CD8-positive, alpha-beta T cell (primary cell): ENCODE measurements at regions of chr9 and their contacts with region 1.

Region 1: GRCh38 chr9:28539432-28540070 is 966.3 kb upstream of the C9orf72 start:
- DNase-seq: no peak
- ATAC-seq: no peak
- H3K4me3 ChIP-seq: no peak overlapping the region
- H3K4me3 Mint-ChIP-seq: no peak overlapping the region
- H3K27ac ChIP-seq: no peak overlapping the region
- H3K27ac Mint-ChIP-seq: no peak overlapping the region
- H3K4me1 ChIP-seq: no peaks in the 10 kb centered on the region
- H3K4me1 Mint-ChIP-seq: no peaks in the 10 kb centered on the region
- H3K27me3 ChIP-seq: no peaks in the 10 kb centered on the region
- H3K27me3 Mint-ChIP-seq: no peaks in the 10 kb centered on the region
- CTCF ChIP-seq: no peak

Region 2: DNA sequence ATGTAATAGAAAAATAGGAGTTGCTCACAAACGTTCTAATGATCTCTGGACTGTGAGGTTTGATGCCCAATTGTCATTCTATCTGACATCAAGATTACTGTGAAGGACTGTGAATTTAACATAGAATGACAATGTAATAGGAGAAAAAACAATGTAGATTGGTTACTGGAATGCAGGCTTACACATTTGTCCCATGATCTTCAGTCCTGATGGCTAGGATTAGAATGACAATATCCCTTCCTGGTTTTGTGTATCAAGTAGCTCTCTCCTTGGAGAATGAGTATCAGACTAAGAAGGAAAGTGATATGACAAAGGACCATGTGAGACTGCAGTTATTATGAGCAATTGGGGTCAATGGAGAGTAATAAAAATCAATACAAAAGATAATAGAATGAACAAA is 104.1 kb before region 1 on chr9:
- CTCF ChIA-PET with region 1: no interaction called
- POLR2A ChIA-PET with region 1: no interaction called
- intact Hi-C with region 1: no loop called
- DNase-seq: no peak
- ATAC-seq: no peak
- H3K4me3 ChIP-seq: no peak overlapping the region
- H3K4me3 Mint-ChIP-seq: no peak overlapping the region
- H3K27ac ChIP-seq: no peak overlapping the region
- H3K27ac Mint-ChIP-seq: no peak overlapping the region
- H3K4me1 ChIP-seq: no peaks in the 10 kb centered on the region
- H3K4me1 Mint-ChIP-seq: no peaks in the 10 kb centered on the region
- H3K27me3 ChIP-seq: no peaks in the 10 kb centered on the region
- H3K27me3 Mint-ChIP-seq: no peaks in the 10 kb centered on the region
- CTCF ChIP-seq: no peak

Region 3: GRCh38 chr9:28600226-28600625 is 60.7 kb after region 1 on chr9:
- CTCF ChIA-PET with region 1: no interaction called
- POLR2A ChIA-PET with region 1: no interaction called
- intact Hi-C with region 1: loop called in 1 of 2 experiments (anchors 10 kb)
- DNase-seq: no peak
- ATAC-seq: no peak
- H3K4me3 ChIP-seq: no peak overlapping the region
- H3K4me3 Mint-ChIP-seq: no peak overlapping the region
- H3K27ac ChIP-seq: no peak overlapping the region
- H3K27ac Mint-ChIP-seq: no peak overlapping the region
- H3K4me1 ChIP-seq: no peaks in the 10 kb centered on the region
- H3K4me1 Mint-ChIP-seq: no peaks in the 10 kb centered on the region
- H3K27me3 ChIP-seq: no peaks in the 10 kb centered on the region
- H3K27me3 Mint-ChIP-seq: no peaks in the 10 kb centered on the region
- CTCF ChIP-seq: no peak